Calu3 (cell line): ENCODE measurements at regions of chr1 and their contacts with region 1.

Region 1: GRCh38 chr1:216961516-216961915 is 238.3 kb upstream of the ESRRG start:
- DNase-seq: no peak
- H3K4me3 Mint-ChIP-seq: no peak overlapping the region
- H3K27ac Mint-ChIP-seq: no peak overlapping the region
- H3K4me1 Mint-ChIP-seq: no peaks in the 10 kb centered on the region
- H3K27me3 Mint-ChIP-seq: no peaks in the 10 kb centered on the region
- CTCF ChIP-seq: no peak

Region 2: DNA sequence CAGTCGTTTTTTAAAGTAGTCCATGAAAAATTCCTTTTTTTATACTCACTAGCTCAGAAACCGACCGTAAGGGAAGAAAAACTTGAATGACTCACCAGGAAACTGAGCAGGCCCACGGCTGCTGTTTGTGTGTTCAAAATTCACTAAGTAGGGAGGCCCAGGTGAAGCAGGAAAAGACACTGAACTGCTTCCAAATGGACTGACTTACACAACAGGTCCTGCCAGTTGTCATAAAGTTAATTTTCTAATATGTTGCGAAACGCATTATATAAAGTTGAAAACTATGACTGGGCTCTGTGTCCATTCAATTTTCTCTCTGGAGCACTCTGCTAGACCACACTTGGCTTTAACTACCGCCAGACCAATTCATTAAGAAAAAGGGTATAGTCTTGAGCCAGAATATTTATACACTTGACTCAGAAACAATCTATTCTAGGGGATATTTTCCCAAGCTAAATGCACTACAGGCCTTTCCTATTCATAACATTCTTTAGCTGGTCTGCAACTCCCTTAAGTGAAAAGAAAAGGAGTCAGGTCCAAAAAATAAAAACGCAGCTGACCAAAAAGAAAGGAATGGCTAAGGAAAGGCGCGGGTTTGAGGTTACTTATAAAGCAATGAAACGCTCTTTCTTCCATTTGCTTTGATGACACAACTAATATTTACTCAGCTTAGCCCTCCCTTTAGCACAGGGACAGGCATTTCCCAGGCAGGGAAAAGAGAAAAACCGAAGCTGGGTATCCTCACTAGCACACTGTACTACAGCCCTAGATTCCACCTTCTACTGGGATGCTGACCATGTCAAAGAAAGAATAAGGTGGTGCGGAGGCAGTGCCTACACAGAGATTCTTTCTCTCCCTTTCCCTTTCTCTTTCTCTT is 68.0 kb after region 1 on chr1:
- CTCF ChIA-PET with region 1: no interaction called
- intact Hi-C with region 1: loop called (anchors 5 kb)
- DNase-seq: peak; percentile 77
- H3K4me3 Mint-ChIP-seq: peak overlapping the region; percentile 2
- H3K27ac Mint-ChIP-seq: peak overlapping the region; percentile 48
- H3K4me1 Mint-ChIP-seq: peaks cover 46% of the 10 kb centered on the region
- H3K27me3 Mint-ChIP-seq: no peaks in the 10 kb centered on the region
- CTCF ChIP-seq: no peak

Region 3: GRCh38 chr1:217230412-217230811 is 268.9 kb after region 1 on chr1:
- CTCF ChIA-PET with region 1: no interaction called
- intact Hi-C with region 1: no loop called
- DNase-seq: no peak
- H3K4me3 Mint-ChIP-seq: no peak overlapping the region
- H3K27ac Mint-ChIP-seq: no peak overlapping the region
- H3K4me1 Mint-ChIP-seq: no peaks in the 10 kb centered on the region
- H3K27me3 Mint-ChIP-seq: no peaks in the 10 kb centered on the region
- CTCF ChIP-seq: no peak

Region 4: GRCh38 chr1:217333939-217334338 is 372.4 kb after region 1 on chr1:
- CTCF ChIA-PET with region 1: no interaction called
- intact Hi-C with region 1: loop called (anchors 1 kb)
- DNase-seq: peak; percentile 58
- H3K4me3 Mint-ChIP-seq: no peak overlapping the region
- H3K27ac Mint-ChIP-seq: no peak overlapping the region
- H3K4me1 Mint-ChIP-seq: no peaks in the 10 kb centered on the region
- H3K27me3 Mint-ChIP-seq: no peaks in the 10 kb centered on the region
- CTCF ChIP-seq: peak; percentile 61

Region 5: GRCh38 chr1:217747156-217747769 is 785.7 kb after region 1 on chr1:
- CTCF ChIA-PET with region 1: no interaction called
- intact Hi-C with region 1: loop called (anchors 5 kb)
- DNase-seq: no peak
- H3K4me3 Mint-ChIP-seq: no peak overlapping the region
- H3K27ac Mint-ChIP-seq: no peak overlapping the region
- H3K4me1 Mint-ChIP-seq: no peaks in the 10 kb centered on the region
- H3K27me3 Mint-ChIP-seq: no peaks in the 10 kb centered on the region
- CTCF ChIP-seq: peak; percentile 51